PC-9 (cell line): ENCODE measurements at regions of chr7 and their contacts with region 1.

Region 1: DNA sequence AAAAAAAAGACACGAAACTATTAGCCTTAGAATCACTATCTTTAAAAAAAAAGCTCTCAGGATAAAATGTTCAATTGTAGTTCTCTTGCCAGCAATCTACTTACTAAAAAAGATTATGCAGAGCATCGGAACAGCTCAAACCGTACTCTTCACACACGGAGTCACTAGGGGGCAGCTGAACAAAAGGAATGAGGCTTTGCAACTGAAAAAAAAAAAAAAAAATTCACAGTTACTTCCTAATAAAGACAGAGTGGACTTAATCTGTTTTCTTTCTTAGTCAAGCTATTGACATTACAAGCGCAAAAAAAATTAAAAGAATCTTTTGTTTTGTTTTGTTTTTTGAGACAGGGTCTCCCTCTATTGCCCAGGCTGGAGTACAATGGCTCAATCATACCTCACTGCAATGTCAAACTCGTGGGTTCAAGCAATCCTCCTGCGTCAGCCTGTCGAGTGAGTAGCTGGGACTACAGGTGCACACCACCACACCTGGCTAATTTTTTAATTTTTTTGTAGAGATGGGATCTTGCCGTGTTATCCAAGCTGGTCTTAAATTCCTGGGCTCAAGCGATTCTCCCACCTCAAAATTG is 11.5 kb downstream of the PMS2 start:
- DNase-seq: peak; percentile 54 to 70
- H3K4me3 ChIP-seq: no peak overlapping the region
- H3K27ac ChIP-seq: no peak overlapping the region
- H3K4me1 ChIP-seq: peaks cover 16% of the 10 kb centered on the region
- H3K27me3 ChIP-seq: no peaks in the 10 kb centered on the region
- CTCF ChIP-seq: peak; percentile 78

Region 2: DNA sequence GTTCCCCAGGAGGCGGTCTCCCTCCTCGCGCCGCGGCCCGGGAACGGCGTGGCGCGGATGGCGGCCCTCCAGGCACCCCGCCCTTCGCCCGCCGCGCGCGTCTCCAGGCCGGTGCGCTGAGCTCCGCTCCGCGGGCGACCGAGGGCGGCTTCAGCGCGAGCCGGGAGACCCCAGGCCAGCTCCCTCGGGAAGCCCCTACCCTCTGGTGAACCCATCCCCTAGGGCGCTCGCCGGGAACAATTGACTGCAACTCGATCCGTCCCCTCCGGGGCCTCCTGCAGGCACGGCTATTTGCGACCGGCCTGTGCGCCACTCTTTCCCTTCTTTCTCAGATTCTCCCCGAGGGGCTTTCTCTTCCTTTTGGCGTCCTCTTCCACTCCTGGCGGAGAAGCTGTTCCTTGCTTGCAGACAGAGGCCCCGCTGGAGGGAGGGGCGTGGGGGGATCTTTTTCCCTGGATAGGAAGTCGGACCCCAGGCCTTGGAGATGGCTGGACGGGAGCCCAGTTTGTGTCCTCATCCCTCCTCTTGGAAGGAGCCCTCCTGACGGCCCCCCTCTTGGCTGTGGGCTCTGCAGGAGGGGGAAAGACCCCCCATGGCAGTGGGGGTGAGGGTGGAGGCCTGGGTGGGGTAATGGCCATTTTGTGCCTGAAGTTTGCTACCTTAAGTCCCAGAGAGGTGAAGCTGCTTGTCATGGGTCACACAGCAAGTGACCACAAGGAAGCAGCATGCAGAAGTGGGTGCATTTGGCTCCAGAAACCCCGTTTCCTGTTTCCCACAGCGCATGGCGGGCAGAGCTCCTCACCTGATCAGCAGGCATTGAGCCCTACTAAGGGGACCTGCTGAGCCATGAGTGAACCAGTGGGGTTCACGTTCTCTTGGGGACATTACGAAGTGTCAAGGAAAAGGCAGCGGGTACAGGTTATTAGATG is 402.4 kb before region 1 on chr7:
- CTCF ChIA-PET with region 1: no interaction called
- POLR2A ChIA-PET with region 1: no interaction called
- intact Hi-C with region 1: no loop called
- DNase-seq: no peak
- H3K4me3 ChIP-seq: peak overlapping the region; percentile 80
- H3K27ac ChIP-seq: peak overlapping the region; percentile 60
- H3K4me1 ChIP-seq: peaks cover 67% of the 10 kb centered on the region
- H3K27me3 ChIP-seq: no peaks in the 10 kb centered on the region
- CTCF ChIP-seq: no peak

Region 3: GRCh38 chr7:5854738-5855137 is 142.6 kb before region 1 on chr7:
- CTCF ChIA-PET with region 1: no interaction called
- POLR2A ChIA-PET with region 1: interaction called, 4 read pairs
- intact Hi-C with region 1: loop called (anchors 10 kb)
- DNase-seq: no peak
- H3K4me3 ChIP-seq: no peak overlapping the region
- H3K27ac ChIP-seq: no peak overlapping the region
- H3K4me1 ChIP-seq: no peaks in the 10 kb centered on the region
- H3K27me3 ChIP-seq: no peaks in the 10 kb centered on the region
- CTCF ChIP-seq: no peak

Region 4: DNA sequence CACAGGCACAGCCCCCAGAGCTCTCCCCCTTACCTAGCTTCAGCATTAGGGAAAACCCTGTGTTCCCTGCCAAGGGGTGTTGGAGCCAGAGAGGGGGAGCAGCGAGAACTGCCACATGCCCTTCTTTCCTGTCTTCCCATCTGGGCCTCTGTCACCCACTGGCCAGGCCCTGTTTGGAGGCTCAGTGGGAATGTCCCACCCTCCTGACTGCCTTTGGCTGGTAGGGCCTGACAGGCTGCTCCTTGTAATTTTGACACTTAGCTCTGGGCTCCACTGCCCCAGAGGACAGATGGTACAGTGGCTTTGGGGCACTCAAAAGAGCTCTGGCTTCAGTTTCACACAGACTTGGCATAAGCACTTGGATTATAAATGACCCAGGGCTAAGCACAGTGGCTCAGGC is 503.4 kb after region 1 on chr7:
- CTCF ChIA-PET with region 1: no interaction called
- POLR2A ChIA-PET with region 1: interaction called, 13 read pairs
- intact Hi-C with region 1: no loop called
- DNase-seq: no peak
- H3K4me3 ChIP-seq: no peak overlapping the region
- H3K27ac ChIP-seq: no peak overlapping the region
- H3K4me1 ChIP-seq: peaks cover 11% of the 10 kb centered on the region
- H3K27me3 ChIP-seq: no peaks in the 10 kb centered on the region
- CTCF ChIP-seq: no peak